ENCODE measurements at regions of chr2 and their contacts with region 1.

Region 1: DNA sequence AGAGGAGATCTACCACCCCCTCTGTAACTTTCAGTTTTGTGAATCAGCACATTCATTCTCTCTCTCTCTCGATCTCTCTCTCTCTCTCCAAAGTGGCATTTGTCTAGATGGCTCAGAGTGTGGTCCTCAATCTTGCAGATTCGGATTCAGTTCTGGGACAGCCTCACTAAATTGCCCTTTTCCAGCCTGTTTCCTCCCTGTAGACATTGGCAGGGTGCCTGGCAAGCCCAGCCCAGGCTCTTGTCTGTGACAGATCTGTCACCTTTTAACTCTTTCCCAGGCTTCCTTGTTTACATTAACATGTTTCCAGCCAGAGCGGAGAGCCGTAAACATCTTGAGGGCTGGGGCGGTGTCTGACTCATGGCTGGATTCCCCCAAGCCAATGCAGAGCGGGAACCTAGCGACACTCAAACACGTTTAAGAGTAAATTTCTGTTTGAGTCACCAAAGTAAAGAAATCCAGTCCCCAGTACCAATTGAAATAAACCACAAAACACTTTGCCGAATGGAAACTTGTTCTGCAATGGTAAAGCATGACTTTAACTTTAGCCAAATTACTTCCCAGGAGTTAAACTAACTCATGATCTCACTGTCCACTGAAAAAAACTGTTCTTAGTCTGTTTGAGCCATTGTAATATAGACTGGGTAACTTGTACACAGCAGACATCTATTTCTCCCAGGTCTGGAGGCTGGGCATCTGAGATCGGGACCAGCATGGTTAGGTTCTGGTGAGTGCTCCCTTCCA is 6.6 kb upstream of the CYP27C1 start:
- DNase-seq: peak; percentile 13
- H3K4me3 Mint-ChIP-seq: peak overlapping the region; percentile 71
- H3K27ac Mint-ChIP-seq: peak overlapping the region; percentile 82
- H3K4me1 Mint-ChIP-seq: peaks cover 6% of the 10 kb centered on the region
- H3K27me3 Mint-ChIP-seq: peaks cover 20% of the 10 kb centered on the region

Region 2: GRCh38 chr2:127293748-127294562 is 67.3 kb after region 1 on chr2 and contains the start of gene ERCC3:
- intact Hi-C with region 1: loop called (anchors 5 kb)
- DNase-seq: peak; percentile 76
- H3K4me3 Mint-ChIP-seq: peak within 1 kb of the TSS; percentile 99
- H3K27ac Mint-ChIP-seq: peak within 1 kb of the TSS; percentile 98
- H3K4me1 Mint-ChIP-seq: peaks cover 23% of the 10 kb centered on the region
- H3K27me3 Mint-ChIP-seq: no peaks in the 10 kb centered on the region
- total RNA-seq, gene ERCC3: 63.1 and 65.5 TPM in 2 replicates